ENCODE measurements at regions of chr14 and their contacts with region 1.

Region 1: DNA sequence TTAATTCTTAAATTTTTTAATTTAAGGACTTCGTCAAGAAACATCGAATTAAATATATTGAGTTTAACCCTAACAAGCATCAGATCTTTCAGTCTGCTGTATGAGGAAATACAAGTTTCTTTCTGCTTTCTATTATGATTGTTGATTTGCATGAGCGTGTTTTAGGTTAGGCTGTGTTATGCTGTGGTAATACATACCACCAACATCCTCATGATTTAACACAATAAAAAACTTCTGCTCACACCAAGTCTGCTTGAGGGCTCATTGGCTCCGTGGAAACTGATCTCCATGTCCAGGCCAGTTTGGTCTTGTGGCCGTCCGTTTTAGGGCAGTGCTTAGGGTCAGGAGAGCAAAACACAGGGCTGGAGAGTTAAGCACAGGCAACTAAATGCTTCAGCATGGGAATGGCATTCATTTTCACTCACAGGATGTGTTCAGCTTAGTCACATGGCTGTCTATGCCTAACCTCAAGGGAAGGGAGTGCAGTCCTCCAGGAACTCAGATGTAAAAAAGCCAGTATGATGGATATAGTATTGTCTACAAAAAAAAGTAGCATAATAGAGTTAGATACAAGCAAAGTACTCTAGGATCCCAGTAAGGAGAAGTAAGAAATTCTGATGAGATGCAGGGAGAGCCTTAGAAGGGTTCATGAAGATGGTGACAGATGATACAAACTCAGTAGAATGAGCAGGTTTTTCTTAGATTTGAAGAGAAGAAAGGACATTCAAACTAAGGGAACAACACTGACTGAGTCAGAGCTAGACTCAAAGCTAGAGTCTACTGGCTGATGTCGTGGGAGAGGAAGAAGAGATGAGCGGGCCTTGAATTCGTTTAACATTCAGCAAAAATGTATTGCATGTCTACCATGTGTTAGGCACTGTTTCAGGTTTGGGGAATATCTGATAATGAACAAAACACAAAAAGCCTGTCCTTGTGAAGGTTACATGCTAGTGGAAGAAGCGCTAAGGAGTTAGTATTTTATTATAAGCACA is 16.3 kb downstream of the MARK3 start:
- DNase-seq: peak; percentile 70
- H3K4me3 Mint-ChIP-seq: peak overlapping the region; percentile 20
- H3K27ac Mint-ChIP-seq: peak overlapping the region; percentile 77
- H3K4me1 Mint-ChIP-seq: peaks cover 42% of the 10 kb centered on the region
- H3K27me3 Mint-ChIP-seq: no peaks in the 10 kb centered on the region

Region 2: GRCh38 chr14:103385152-103385993 is 16.1 kb before region 1 on chr14 and contains the start of gene MARK3:
- intact Hi-C with region 1: loop called (anchors 2 kb)
- DNase-seq: peak; percentile 99
- H3K4me3 Mint-ChIP-seq: peak within 1 kb of the TSS; percentile 94
- H3K27ac Mint-ChIP-seq: peak within 1 kb of the TSS; percentile 96
- H3K4me1 Mint-ChIP-seq: peaks cover 33% of the 10 kb centered on the region
- H3K27me3 Mint-ChIP-seq: peaks cover 6% of the 10 kb centered on the region
- total RNA-seq, gene MARK3: 82.0 and 89.7 TPM in 2 replicates

Region 3: GRCh38 chr14:103763730-103764488 is 362.4 kb after region 1 on chr14:
- intact Hi-C with region 1: no loop called
- DNase-seq: no peak
- H3K4me3 Mint-ChIP-seq: no peak overlapping the region
- H3K27ac Mint-ChIP-seq: no peak overlapping the region
- H3K4me1 Mint-ChIP-seq: no peaks in the 10 kb centered on the region
- H3K27me3 Mint-ChIP-seq: no peaks in the 10 kb centered on the region